Endothelial cell of umbilical vein (primary cell): ENCODE measurements at regions of chr17 and their contacts with region 1.

Region 1: GRCh38 chr17:60036796-60037612 is 41.7 kb downstream of the HEATR6 start:
- DNase-seq: peak; percentile 75
- H3K4me3 ChIP-seq: no peak overlapping the region
- H3K27ac ChIP-seq: no peak overlapping the region
- H3K4me1 ChIP-seq: peaks cover 4% of the 10 kb centered on the region
- H3K27me3 ChIP-seq: peaks cover 4 to 13% of the 10 kb centered on the region in 2 experiments
- CTCF ChIP-seq: peak; percentile 96 to 97
- POLR2A ChIP-seq: no peak

Region 2: GRCh38 chr17:59707114-59707970 is 329.7 kb before region 1 on chr17 and contains the starts of genes PTRH2 and VMP1:
- CTCF ChIA-PET with region 1: interaction called, 3 read pairs
- POLR2A ChIA-PET with region 1: no interaction called
- dilution Hi-C with region 1: no loop called
- intact Hi-C with region 1: loop called (anchors 10 kb)
- DNase-seq: peak; percentile 100
- H3K4me3 ChIP-seq: peak within 1 kb of the TSS; percentile 59 to 90 (median 89)
- H3K27ac ChIP-seq: peak within 1 kb of the TSS; percentile 97
- H3K4me1 ChIP-seq: peaks cover 26% of the 10 kb centered on the region
- H3K27me3 ChIP-seq: no peaks in the 10 kb centered on the region
- CTCF ChIP-seq: no peak
- POLR2A ChIP-seq: peak; percentile 94
- total RNA-seq, gene PTRH2: 40.1 and 41.2 TPM in 2 replicates
- total RNA-seq, gene VMP1: 270 and 321 TPM in 2 replicates

Region 3: DNA sequence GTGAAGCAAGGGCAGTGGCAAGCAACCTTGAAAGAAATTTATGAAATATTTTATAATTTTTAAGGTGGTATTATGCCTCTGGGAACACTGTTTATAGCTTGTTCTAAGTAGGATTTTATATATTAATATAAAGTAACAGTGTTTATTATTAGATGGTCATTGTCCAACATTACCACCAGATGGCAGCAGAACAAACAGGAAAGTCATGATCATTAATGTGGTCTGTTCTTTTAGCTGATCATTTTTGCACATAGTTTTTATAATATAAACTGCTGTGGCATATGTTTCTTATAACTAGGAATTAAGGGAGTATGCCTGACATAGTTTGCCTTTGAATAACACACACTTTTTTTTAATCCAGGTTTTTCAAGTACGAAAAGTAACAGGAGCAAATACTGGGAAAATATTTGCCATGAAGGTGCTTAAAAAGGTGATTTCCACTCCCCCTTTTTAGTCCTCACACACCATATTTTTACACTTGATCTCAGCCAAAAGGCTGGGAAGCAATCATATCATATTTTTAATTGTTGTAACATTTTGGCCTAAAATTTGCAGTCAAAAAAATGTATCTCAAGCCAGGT is 122.6 kb before region 1 on chr17:
- CTCF ChIA-PET with region 1: interaction called, 86 read pairs
- POLR2A ChIA-PET with region 1: no interaction called
- dilution Hi-C with region 1: no loop called
- intact Hi-C with region 1: loop called (anchors 10 kb)
- DNase-seq: peak; percentile 46
- H3K4me3 ChIP-seq: no peak overlapping the region
- H3K27ac ChIP-seq: no peak overlapping the region
- H3K4me1 ChIP-seq: no peaks in the 10 kb centered on the region
- H3K27me3 ChIP-seq: no peaks in the 10 kb centered on the region
- CTCF ChIP-seq: peak; percentile 30 to 33
- POLR2A ChIP-seq: no peak

Region 4: DNA sequence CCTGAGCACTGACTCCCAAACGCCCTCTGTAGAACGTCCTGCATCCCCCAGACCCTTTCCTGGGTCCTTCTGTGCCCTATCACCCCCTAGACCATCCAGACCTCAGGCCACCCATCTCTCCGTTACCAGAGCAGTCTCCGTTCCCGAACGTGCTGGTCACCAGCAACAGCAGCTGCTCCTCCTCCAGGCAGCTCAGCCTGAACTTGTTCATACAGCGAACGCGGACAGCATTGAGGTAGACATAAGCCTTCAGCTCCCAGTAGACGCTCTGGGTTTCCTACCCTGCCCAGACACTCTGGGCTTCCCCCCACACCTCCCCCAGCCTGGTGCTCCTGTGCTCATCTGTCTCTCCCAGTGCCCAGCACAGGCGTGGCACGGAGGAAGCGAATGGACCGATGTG is 30.9 kb before region 1 on chr17:
- CTCF ChIA-PET with region 1: no interaction called
- POLR2A ChIA-PET with region 1: no interaction called
- dilution Hi-C with region 1: no loop called
- intact Hi-C with region 1: no loop called
- DNase-seq: no peak
- H3K4me3 ChIP-seq: no peak overlapping the region
- H3K27ac ChIP-seq: no peak overlapping the region
- H3K4me1 ChIP-seq: no peaks in the 10 kb centered on the region
- H3K27me3 ChIP-seq: no peaks in the 10 kb centered on the region
- CTCF ChIP-seq: no peak
- POLR2A ChIP-seq: no peak

Region 5: DNA sequence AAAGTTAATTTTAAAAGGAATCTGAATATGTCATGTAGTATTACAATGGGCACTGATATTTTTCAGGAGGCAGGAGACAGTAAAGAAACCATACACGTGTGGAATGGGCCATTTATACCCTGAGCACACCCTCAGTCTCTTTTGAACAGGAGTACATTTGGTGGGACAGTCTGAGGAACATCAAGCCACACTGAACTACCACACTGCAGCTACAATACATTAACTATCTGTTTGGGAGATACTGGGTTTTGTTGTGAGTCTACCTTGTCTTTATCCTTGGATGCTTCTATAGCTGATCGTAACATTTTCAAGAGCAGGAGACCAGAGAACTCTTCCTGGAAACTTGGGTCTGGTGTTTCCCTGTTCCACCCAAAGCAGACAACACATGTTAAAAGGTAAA is 10.0 kb after region 1 on chr17:
- CTCF ChIA-PET with region 1: interaction called, 12 read pairs
- POLR2A ChIA-PET with region 1: no interaction called
- dilution Hi-C with region 1: no loop called
- intact Hi-C with region 1: no loop called
- DNase-seq: no peak
- H3K4me3 ChIP-seq: no peak overlapping the region
- H3K27ac ChIP-seq: no peak overlapping the region
- H3K4me1 ChIP-seq: no peaks in the 10 kb centered on the region
- H3K27me3 ChIP-seq: no peaks in the 10 kb centered on the region
- CTCF ChIP-seq: no peak
- POLR2A ChIP-seq: no peak